ENCODE measurements at regions of chr3 and their contacts with region 1.

Region 1: DNA sequence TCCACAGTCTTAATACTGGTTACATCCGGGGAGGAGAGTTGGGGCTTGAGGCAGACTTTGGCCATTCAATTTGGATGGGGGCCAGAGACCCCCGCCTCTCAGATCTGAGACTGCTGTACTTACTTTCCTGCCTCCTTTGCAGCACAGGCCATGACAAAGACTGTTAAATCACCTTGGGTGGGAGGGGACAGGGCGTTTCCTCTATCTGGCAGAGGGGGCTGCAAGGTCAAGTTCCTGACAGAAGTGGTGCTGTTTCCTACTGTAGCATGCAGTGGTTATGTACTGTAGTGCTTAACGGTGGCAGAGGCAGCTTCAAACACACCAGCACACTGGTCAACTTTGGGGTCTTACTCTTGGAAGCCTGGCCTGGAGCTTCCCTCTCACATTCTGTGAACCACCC is 261.2 kb upstream of the LRRFIP2 start:
- DNase-seq: no peak
- H3K4me3 ChIP-seq: no peak overlapping the region
- H3K27ac ChIP-seq: no peak overlapping the region
- H3K4me1 ChIP-seq: no peaks in the 10 kb centered on the region
- H3K27me3 ChIP-seq: no peaks in the 10 kb centered on the region
- CTCF ChIP-seq: no peak
- EP300 ChIP-seq: no peak
- POLR2A ChIP-seq: no peak

Region 2: DNA sequence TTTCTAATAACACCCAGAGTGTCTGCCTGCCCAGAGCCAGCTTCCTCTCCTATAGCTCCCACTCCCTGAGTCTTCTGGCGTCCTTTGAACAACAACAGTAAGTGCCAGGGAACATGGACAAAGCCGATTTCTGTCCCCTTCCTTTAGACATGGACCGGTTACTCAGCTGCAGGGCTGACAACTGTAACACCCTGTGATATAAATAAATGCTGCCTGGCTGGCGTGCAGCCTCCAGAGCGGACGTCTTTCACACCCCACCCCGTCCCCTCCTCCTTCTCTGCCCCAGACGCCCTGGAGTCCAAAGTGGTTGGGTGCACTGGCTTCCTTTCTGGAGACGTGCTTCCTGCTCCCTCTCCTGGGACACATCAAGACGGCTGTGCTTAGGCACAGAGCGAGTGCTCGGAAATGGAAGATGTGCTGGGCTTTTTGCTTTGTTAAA is 20.7 kb after region 1 on chr3:
- in situ Hi-C with region 1: no loop called
- intact Hi-C with region 1: no loop called
- DNase-seq: peak; percentile 77
- H3K4me3 ChIP-seq: peak overlapping the region in 1 of 4 donors; percentile 4
- H3K27ac ChIP-seq: peak overlapping the region; percentile 56 to 80 (median 70)
- H3K4me1 ChIP-seq: peaks cover 17 to 55% (median 26%) of the 10 kb centered on the region in 4 donors
- H3K27me3 ChIP-seq: peaks cover 27% of the 10 kb centered on the region
- CTCF ChIP-seq: peak in 1 of 5 experiments; percentile 35
- EP300 ChIP-seq: no peak
- POLR2A ChIP-seq: no peak

Region 3: DNA sequence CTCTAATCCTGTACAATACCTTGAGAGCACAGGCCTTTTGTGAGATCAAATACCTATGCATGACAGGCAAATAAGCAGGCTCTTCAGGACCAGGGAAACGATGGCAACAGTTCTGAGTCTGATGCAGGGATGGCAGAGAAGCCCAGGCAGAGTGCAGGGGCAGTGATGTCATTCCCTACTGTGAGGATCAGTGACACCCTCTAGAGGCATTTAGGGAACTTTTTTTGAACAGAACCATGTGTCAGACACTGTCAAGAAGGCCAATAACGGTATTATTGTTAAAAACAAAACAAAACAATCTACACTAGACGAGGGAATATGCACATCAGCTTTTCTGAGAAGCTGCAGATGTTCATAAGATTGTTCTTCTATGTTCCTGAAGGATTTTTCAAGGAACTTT is 111.3 kb after region 1 on chr3:
- in situ Hi-C with region 1: no loop called
- intact Hi-C with region 1: no loop called
- DNase-seq: no peak
- H3K4me3 ChIP-seq: no peak overlapping the region
- H3K27ac ChIP-seq: no peak overlapping the region
- H3K4me1 ChIP-seq: peaks cover 0 to 12% (median 0%) of the 10 kb centered on the region in 4 donors
- H3K27me3 ChIP-seq: no peaks in the 10 kb centered on the region
- CTCF ChIP-seq: no peak
- EP300 ChIP-seq: no peak
- POLR2A ChIP-seq: no peak

Region 4: DNA sequence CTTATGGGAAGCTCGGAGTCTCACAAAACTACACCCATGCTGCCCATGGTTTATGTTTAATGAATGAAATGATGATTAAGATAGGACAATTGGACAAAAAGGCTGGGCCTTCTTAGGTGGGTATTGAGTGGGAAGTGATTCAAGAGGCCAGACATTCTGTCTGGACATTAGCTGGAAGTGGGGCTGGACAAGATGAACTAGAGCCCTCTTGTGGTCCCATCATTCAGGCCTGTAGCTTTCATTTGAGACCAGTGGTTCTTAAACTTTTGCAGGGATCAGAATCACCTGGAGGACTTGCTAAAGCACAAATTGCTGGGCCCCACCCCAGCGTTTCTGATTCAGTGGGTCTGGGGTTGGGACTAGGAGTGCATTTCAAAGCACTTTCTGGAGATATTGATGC is 135.7 kb after region 1 on chr3:
- in situ Hi-C with region 1: no loop called
- intact Hi-C with region 1: no loop called
- DNase-seq: no peak
- H3K4me3 ChIP-seq: no peak overlapping the region
- H3K27ac ChIP-seq: no peak overlapping the region
- H3K4me1 ChIP-seq: peaks cover 0 to 12% (median 4%) of the 10 kb centered on the region in 4 donors
- H3K27me3 ChIP-seq: no peaks in the 10 kb centered on the region
- CTCF ChIP-seq: no peak
- EP300 ChIP-seq: no peak
- POLR2A ChIP-seq: no peak

Region 5: DNA sequence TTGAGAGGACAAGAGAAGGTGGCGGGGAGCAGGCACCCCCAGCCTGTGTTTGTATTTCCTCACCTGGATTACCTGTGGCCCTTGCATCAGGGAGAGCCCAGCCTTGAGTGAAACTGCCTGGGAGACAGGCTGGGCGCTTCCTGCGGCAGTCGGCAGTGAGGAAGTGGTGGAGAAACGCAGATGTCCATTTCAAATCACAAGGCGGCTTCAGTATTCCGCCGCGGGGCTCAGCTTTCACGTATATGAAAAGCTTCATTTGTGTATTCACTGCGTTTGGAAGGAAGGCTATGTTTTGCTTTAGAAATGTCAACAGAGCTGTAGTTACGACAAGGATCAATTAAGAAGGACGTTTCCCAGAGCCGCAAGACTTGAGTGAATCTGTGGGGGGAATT is 258.7 kb after region 1 on chr3:
- in situ Hi-C with region 1: loop called in 1 of 4 experiments (anchors 25 kb)
- intact Hi-C with region 1: no loop called
- DNase-seq: no peak
- H3K4me3 ChIP-seq: no peak overlapping the region
- H3K27ac ChIP-seq: no peak overlapping the region
- H3K4me1 ChIP-seq: peaks cover 0 to 5% (median 0%) of the 10 kb centered on the region in 4 donors
- H3K27me3 ChIP-seq: no peaks in the 10 kb centered on the region
- CTCF ChIP-seq: no peak
- EP300 ChIP-seq: no peak
- POLR2A ChIP-seq: no peak